ENCODE measurements at regions of chr10 and their contacts with region 1.

Region 1: DNA sequence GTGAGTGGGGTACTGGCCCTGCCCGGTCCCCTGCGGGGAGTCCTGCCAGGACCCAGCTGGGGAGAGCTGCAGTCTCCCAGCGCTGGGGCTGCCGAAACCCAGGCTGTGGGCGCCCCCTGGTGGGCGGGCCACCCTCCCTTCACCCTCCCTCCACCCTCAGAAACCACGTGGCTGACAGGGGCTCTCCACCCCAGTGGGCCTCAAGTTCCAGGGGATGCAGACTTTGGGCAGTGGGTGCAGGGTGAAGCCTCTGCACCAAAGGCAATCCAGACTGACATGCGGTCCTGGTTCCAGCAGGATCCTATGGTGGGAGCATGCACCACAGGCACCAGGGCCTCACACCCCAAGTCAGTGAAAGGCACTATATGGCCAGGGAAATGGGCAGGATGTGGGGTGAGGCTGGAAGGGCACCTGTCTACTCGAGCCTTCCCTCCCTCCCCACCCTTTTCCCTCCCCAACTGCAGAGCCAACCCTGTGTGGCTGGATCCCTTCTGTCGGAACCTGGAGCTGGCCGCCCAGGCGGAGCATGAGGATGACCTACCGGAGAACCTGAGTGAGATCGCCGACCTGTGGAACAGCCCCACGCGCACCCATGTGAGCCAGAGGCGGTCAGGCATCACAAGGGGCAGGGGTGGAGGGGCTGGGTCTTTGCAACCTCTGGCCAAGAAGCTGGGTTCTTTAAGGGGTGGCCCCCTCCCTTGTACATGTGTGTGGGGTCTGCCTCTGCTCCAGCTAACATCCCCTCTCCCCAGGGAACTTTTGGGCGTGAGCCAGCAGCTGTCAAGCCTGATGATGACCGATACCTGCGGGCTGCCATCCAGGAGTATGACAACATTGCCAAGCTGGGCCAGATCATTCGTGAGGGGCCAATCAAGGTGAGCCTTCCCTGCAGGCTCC is 38.8 kb downstream of the PSAP start:
- DNase-seq: peak; percentile 93

Region 2: DNA sequence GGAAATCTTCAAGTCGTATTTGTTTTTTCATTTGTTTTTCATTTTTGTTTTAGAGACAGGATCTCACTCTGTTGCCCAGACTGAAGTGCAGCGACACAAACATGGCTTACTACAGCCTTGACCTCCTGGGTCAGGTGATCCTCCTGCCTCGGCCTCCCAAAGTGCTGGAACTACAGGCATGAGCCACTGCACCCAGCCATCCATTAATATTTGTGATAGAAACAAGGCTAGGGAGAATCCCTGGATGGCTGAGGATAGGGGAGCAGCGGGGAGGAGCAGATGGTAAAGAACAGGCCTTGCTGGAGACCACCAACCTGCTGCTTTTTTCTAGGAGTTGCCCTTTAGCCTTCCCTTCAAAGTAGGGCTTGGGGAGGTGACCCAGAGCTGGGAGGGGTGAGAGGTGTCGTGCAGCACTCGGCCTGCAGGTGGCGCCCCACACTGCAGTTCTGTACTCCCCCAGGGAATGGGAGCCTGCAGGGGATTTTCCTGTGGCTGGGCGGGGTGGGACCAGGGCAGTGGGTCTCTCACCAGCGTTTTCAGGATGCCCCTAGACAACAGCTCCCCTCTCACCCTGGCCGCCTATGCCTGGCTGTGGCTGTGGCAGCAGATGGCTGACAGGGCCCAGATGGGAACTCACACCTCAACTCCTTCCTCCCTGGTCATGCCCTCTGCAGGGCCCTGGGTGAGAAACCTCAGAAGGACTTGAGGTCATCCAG is 428.1 kb before region 1 on chr10:
- intact Hi-C with region 1: loop called (anchors 1 kb)
- DNase-seq: peak; percentile 90

Region 3: DNA sequence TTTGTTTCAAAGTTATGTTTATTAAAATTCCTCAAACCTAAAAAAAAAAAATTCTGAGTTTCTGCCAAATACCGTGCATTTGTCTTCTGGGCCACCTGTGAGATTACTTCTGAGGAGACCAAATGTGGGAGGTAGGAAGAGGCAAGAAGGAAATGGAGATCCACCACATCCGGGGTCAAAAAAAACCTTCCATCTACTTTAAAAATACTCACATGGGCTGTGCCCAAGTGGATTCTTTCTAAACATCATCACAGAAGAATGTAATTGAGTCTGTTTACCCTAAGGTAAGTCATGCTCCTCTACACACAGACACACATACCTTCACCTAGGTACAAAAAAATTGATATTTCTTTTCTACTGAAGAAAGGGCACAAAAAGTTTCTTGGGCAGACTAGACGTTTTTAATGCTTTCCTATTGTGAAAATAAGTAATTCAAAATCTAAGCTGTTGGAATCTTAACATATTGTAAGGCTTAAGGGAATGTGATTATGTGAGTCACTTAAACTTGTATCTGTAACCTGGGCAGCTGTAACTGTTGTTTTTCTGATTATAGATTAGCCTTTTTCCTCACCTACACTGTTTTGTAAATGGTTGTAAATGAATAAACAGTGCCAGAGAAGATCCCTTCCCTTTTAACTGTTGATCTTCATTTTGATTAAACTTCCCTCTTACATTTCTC is 295.2 kb after region 1 on chr10:
- intact Hi-C with region 1: no loop called
- DNase-seq: no peak